ENCODE measurements at regions of chr1 and their contacts with region 1.

Region 1: DNA sequence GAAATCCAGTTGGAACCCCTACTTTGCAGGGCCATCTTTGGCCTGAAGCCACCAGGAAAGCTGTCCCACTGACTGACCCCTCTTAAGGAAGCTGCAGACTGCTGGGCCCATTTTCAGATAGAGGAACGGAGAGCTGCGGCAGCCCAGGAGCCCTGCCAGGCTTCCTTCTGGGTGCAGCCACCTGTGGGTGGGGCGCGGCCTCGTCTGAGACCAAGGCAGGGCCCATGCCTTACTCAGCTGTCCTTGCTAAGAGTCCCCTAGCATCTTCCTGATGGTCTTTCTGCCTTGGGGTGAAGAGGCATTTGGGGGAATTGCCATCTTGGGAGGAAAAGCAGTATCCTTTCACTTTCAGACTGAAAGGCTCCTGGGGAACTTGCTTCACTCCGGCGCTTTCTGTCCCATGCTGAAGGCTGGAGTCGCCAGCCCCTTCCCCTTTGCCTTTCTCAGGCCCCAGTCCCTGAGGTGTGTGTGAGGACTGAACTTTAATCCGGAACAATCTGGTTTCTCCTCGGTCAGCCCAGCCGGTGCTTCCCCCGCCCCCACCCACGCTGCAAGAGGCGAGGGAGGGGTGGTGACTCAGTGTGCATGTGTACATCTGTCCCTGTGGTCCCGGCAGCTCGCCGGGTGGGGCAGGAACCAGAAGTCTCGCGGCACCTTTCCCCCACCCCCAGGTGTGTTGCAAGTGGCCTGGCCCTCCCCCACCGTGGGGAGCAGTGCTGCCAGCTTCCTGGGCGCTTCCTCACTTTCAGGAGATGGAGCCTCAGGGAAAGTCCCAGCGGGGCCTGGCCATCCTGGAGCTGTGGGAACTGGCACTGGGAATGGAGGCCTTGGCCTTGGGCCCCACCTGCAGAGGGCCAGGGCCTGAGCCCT is 5.1 kb downstream of the ZC3H12A start:
- DNase-seq: peak; percentile 93 to 98
- H3K4me3 ChIP-seq: peak overlapping the region; percentile 94
- H3K27ac ChIP-seq: peak overlapping the region; percentile 96
- H3K4me1 ChIP-seq: peaks cover 56% of the 10 kb centered on the region
- H3K27me3 ChIP-seq: no peaks in the 10 kb centered on the region
- CTCF ChIP-seq: no peak

Region 2: DNA sequence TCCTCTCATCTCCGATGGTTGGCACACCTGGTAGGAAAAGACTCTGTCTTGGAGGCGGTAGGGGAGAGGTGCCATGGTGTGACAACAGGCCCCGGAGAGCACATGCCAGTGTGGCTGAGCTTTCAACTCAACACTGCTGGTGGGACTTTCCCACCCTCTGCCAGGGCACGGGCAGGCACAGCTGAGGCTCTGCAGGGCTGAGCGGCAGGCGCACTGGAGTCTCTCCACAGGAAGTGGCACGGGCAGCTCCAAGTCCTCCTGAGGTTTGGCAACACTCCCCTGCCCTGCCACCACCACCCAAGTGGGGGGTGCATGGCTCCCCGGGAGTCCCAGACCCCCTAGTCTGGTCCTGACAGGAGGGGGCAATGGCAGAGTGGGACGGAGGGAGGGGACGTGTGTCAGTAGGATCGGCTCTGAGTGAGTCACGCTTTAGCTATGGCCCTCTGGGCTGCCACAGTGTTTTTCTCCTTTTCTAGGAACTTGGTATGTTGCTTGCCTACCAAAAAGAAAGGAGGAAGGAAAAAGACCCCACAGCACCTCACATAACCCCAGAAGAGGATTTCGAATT is 1128.7 kb before region 1 on chr1:
- CTCF ChIA-PET with region 1: no interaction called
- POLR2A ChIA-PET with region 1: interaction called, 31 read pairs
- intact Hi-C with region 1: loop called (anchors 2 kb)
- DNase-seq: peak; percentile 89 to 91
- H3K4me3 ChIP-seq: peak overlapping the region; percentile 41; the same call in 1 of the 2 replicates
- H3K27ac ChIP-seq: peak overlapping the region; percentile 97
- H3K4me1 ChIP-seq: peaks cover 67% of the 10 kb centered on the region
- H3K27me3 ChIP-seq: no peaks in the 10 kb centered on the region
- CTCF ChIP-seq: no peak

Region 3: GRCh38 chr1:36553591-36554322 is 925.7 kb before region 1 on chr1:
- CTCF ChIA-PET with region 1: no interaction called
- POLR2A ChIA-PET with region 1: no interaction called
- intact Hi-C with region 1: no loop called
- DNase-seq: peak; percentile 46 to 73
- H3K4me3 ChIP-seq: no peak overlapping the region
- H3K27ac ChIP-seq: no peak overlapping the region
- H3K4me1 ChIP-seq: no peaks in the 10 kb centered on the region
- H3K27me3 ChIP-seq: peaks cover 87% of the 10 kb centered on the region
- CTCF ChIP-seq: peak; percentile 90

Region 4: GRCh38 chr1:37514350-37515184 is 35.1 kb after region 1 on chr1 and contains the start of gene MEAF6:
- CTCF ChIA-PET with region 1: interaction called, 3 read pairs
- POLR2A ChIA-PET with region 1: interaction called, 12 read pairs
- intact Hi-C with region 1: loop called (anchors 2 kb)
- DNase-seq: peak; percentile 58 to 86
- H3K4me3 ChIP-seq: peak within 1 kb of the TSS; percentile 95
- H3K27ac ChIP-seq: peak within 1 kb of the TSS; percentile 77
- H3K4me1 ChIP-seq: peaks cover 17% of the 10 kb centered on the region
- H3K27me3 ChIP-seq: no peaks in the 10 kb centered on the region
- CTCF ChIP-seq: peak; percentile 63
- total RNA-seq, gene MEAF6: 72.3 and 88.7 TPM in 2 replicates

Region 5: GRCh38 chr1:37537378-37537777 is 57.9 kb after region 1 on chr1:
- CTCF ChIA-PET with region 1: no interaction called
- POLR2A ChIA-PET with region 1: interaction called, 3 read pairs
- intact Hi-C with region 1: loop called (anchors 1 kb)
- DNase-seq: peak; percentile 51 to 87
- H3K4me3 ChIP-seq: no peak overlapping the region
- H3K27ac ChIP-seq: peak overlapping the region; percentile 40
- H3K4me1 ChIP-seq: peaks cover 48% of the 10 kb centered on the region
- H3K27me3 ChIP-seq: no peaks in the 10 kb centered on the region
- CTCF ChIP-seq: no peak

Region 6: DNA sequence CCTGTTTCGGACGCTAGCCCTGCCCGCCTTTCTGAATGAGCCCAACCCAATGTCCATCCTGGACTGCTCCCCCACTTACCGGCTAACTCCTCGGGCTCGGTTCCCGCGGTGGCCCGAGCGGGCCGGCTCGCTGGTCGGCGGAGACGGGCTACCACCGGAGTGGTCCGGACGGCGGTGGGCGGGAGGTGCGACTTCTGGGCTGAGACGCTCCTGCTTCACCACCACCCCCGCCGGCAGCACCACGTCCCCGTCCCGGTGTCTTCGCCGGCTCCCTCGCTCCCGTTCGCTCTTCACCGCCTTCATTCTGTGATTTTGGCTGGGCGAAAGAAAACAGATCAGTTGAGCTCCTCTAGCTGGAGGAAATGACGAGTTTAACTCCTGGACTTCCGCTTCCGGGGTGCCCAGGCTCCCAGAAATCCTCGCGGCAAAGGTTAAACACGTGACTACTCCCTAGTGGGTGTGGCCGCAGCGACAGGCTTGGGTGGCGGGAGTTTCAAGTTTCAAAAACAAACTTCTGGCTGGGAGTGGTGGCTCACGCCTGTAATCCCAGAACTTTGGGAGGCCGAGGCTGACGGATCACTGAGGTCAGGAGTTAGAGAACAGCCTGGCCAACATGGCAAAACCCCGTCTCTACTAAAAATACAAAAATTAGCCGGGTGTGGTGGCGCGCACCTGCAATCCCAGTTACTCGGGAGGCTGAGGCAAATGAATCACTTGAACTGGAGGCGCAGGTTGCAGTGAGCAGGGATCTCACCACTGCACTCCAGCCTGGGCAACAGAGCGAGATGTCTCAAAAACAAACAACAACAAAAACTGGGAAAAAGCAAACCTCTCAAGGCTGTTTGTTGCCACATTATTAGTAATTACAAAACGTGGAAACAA is 74.7 kb after region 1 on chr1 and contains the start of gene SNIP1:
- CTCF ChIA-PET with region 1: no interaction called
- POLR2A ChIA-PET with region 1: no interaction called
- intact Hi-C with region 1: loop called (anchors 5 kb)
- DNase-seq: peak; percentile 89 to 90
- H3K4me3 ChIP-seq: peak within 1 kb of the TSS; percentile 78
- H3K27ac ChIP-seq: peak within 1 kb of the TSS; percentile 41; the same call in 1 of the 2 replicates
- H3K4me1 ChIP-seq: peaks cover 16% of the 10 kb centered on the region
- H3K27me3 ChIP-seq: no peaks in the 10 kb centered on the region
- CTCF ChIP-seq: no peak
- total RNA-seq, gene SNIP1: 23.5 and 32.5 TPM in 2 replicates

Region 7: DNA sequence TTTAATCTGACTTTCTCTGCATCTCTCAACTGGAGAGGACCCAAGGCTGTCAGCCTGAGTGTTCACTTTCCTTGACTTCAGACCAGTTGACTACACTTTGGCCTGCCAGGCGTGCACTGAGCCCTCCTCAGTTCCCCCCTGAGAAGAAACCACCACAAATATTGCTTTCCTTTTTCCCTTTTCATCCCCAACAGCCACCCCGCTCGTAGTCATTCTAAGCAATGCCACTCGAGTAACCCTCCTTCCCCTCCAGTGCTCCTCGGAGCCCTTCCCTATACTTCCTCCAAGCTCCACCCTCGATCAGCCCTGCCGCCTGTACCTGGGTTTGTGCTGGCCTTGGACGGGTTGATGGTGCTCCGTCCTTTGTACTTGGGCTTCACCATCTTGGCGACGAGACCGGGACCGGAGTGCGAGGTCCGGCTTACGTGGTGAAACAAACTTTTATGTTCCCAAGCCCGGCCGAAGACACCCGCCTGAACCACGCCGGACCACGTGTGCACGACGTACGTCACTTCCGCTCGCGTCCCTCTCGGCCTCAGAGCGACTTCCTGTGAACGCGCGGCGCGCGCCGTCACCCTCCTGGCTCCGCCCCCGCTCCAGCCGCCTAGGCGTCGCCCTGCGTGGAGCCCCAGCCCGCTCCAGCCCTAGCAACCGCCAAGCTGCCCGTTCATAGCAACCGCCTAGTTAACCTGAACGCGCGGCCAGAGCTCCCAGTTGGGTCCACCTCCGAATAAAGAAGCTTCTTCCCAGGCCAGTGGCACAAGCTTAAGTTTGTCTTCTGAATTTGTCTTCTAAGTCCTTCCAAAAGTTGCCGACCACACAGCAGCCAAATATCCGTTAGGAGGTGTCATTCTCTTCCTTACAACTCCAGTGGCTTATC is 116.2 kb after region 1 on chr1 and contains the start of gene GNL2:
- CTCF ChIA-PET with region 1: no interaction called
- POLR2A ChIA-PET with region 1: no interaction called
- intact Hi-C with region 1: loop called (anchors 5 kb)
- DNase-seq: peak; percentile 85 to 98
- H3K4me3 ChIP-seq: peak within 1 kb of the TSS; percentile 85
- H3K27ac ChIP-seq: peak within 1 kb of the TSS; percentile 3; the same call in 1 of the 2 replicates
- H3K4me1 ChIP-seq: peaks cover 14% of the 10 kb centered on the region
- H3K27me3 ChIP-seq: no peaks in the 10 kb centered on the region
- CTCF ChIP-seq: no peak
- total RNA-seq, gene GNL2: 51.3 and 51.9 TPM in 2 replicates

Region 8: DNA sequence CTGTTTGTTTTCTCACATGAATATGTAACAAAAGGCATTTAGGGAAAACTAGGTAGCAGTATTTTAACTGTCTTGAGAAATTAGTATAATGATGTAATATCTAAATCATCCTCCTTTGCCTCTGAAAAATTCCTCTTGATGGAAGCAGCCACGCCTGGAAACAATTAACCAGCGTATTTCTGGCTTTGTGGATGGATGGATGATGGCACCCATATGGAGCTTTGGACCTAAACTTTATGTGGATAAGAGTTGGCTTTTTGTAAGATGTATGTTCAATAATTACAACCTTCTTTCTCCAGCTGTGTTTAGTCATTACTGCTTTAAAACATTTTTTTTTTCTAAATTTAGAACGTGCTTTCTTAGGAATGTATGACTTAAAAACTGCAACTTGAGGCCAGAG is 225.5 kb after region 1 on chr1:
- CTCF ChIA-PET with region 1: no interaction called
- POLR2A ChIA-PET with region 1: no interaction called
- intact Hi-C with region 1: no loop called
- DNase-seq: no peak
- H3K4me3 ChIP-seq: no peak overlapping the region
- H3K27ac ChIP-seq: no peak overlapping the region
- H3K4me1 ChIP-seq: no peaks in the 10 kb centered on the region
- H3K27me3 ChIP-seq: no peaks in the 10 kb centered on the region
- CTCF ChIP-seq: no peak

Region 9: DNA sequence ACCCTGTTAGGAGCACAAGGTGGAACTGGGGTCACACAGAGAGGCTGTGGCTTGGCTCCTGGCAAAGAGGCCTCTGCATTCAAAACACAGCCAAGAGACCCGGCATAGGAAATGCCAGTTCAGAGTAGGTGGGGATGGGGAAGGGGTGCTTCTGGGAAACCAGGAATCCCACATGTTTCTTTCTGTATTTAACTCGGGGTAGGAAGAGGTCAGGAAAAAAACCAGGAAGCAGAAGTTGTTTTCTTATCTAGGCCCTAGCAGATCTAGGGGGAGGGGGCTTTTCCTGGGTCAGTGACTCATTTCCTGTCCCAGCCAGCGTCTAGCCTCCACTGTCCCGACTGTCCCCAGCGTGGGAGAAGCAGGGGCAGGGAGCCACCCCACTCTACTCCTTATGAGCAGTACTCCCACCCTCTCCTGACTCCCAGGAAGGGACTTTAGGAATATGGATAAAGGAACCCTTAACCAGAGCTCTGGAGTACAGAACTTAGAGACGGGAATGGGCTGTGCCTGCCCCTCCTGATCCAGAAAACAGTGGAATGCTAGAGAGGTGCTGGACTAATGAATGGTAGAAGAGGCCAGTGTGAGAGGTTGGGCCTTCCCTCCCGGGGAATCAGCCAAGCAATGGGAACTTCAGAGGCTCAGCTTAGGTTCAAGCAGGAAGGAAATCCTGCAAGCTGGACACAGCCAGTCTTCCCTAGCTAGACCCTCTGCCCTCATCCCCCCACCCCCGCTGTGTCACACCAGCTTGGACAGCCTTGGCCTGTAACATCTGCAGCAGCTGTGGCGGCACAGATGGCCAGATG is 520.1 kb after region 1 on chr1:
- CTCF ChIA-PET with region 1: no interaction called
- POLR2A ChIA-PET with region 1: no interaction called
- intact Hi-C with region 1: loop called (anchors 5 kb)
- DNase-seq: peak in 1 of 2 experiments; percentile 62
- H3K4me3 ChIP-seq: no peak overlapping the region
- H3K27ac ChIP-seq: peak overlapping the region; percentile 66
- H3K4me1 ChIP-seq: peaks cover 43% of the 10 kb centered on the region
- H3K27me3 ChIP-seq: no peaks in the 10 kb centered on the region
- CTCF ChIP-seq: no peak